SK-N-SH (cell line): ENCODE measurements at regions of chr2 and their contacts with region 1.

Region 1: DNA sequence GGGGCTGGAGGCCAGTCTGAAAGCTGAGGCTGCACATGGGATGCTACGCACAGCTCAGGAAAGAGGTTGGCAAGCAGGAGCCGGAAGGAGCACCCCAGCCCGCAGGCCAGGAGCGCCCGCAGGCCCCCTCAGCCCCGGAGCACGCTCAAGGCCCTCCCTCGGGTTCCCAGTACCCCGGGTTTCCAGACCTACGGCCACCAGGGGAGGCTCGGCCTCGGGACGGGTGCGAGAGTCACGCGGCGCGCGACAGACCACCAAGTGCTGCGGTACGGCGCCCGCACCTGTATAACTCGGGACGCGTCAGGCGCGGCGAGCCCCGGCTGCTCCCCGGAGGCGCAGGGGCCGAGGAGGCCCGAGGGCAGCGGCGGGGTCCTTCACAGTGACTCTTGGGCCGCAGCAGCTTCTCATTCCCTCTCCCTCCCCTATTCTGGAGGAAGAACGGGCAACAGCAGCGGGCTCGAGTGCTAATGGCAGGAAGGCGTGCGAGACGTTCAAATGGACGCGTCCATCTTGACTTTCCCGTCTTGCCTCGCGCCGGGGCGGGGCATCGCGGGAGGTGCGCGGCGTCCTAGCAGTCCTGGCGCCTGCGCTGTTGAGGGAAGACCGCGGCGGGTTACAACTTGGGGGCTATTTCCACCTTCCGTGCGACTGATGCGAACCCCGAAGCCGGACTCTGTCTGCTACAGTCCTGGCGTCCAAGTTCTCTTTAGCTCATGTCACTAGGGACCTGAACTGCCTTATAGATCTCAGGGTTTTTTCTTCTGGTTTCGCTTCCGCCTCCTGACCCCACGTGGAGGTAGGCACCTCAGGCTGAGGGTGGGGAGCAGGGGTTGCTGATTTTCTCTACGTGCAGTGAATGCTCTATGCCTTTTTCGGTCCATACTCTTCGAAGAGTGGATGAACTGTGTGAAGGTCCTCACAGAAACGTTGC is at the start of gene ANAPC1:
- DNase-seq: peak; percentile 90
- H3K4me3 ChIP-seq: peak within 1 kb of the TSS; percentile 84 to 98
- H3K27ac ChIP-seq: peak within 1 kb of the TSS; percentile 57 to 87
- H3K4me1 ChIP-seq: no peaks in the 10 kb centered on the region; a peak in 1 of 4 replicates
- H3K27me3 ChIP-seq: no peaks in the 10 kb centered on the region
- CTCF ChIP-seq: no peak
- EP300 ChIP-seq: no peak
- RAD21 ChIP-seq: no peak
- polyA plus RNA-seq, gene ANAPC1: 16.0 and 22.4 TPM in 2 replicates

Region 2: DNA sequence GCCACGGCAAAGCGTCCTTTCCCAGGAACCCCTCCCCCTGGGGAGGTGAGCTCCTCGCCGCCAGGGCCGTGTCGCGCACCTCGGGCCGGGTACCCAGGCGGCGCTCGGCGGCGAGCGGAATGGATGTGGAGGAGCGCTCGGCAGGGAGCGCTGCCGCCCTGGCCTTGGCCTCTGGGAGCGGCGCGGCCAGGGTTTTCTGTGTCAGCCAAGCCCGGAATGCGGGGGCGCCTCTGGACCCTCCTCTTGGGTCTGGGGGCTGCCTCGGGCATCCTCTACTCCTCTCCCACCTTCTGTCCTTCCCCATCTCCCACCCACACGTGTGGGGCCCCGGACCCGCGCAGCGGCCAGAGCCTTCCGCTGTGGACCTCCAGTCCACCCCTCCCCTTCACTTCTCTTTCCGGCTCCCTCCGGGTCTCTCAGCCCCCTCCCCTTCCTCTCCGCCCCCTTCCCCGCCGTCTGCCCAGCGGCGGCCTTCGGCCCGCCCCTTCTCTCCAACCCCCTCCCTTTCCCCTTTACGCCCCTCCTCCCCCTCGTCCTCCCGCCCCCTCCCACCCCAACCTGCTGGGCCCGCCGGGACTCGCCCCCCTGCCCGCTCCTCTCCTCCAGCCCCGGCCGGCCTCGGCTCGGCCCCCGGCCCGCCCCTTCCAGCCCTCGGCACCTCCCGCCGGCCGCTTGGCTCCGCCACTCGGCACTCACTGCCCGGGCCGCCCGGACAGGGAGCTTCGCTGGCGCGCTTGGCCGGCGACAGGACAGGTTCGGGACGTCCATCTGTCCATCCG is 14.2 kb after region 1 on chr2 and contains the start of gene MERTK:
- CTCF ChIA-PET with region 1: interaction called, 24 read pairs
- POLR2A ChIA-PET with region 1: interaction called, 6 read pairs
- DNase-seq: peak; percentile 99
- H3K4me3 ChIP-seq: peak within 1 kb of the TSS; percentile 68 to 90
- H3K27ac ChIP-seq: peak within 1 kb of the TSS; percentile 50 to 88
- H3K4me1 ChIP-seq: peaks cover 0 to 11% of the 10 kb centered on the region in 2 experiments; a peak in 1 of 4 replicates
- H3K27me3 ChIP-seq: no peaks in the 10 kb centered on the region; the same call in 1 of the 2 replicates
- CTCF ChIP-seq: peak; percentile 62
- EP300 ChIP-seq: 0 out of 4 replicates have a peak, but pooled peaks of 1 of the 2 experiments have one; percentile 2
- RAD21 ChIP-seq: peak; percentile 63
- polyA plus RNA-seq, gene MERTK: 9.6 and 12.4 TPM in 2 replicates

Region 3: GRCh38 chr2:112048887-112049286 is 165.0 kb after region 1 on chr2:
- CTCF ChIA-PET with region 1: interaction called, 215 read pairs
- POLR2A ChIA-PET with region 1: no interaction called
- DNase-seq: peak; percentile 42
- H3K4me3 ChIP-seq: peak overlapping the region in 1 of 2 experiments; percentile 29; a peak in 1 of 4 replicates
- H3K27ac ChIP-seq: no peak overlapping the region
- H3K4me1 ChIP-seq: peaks cover 5 to 8% of the 10 kb centered on the region in 2 experiments; a peak in 2 of 4 replicates
- H3K27me3 ChIP-seq: no peaks in the 10 kb centered on the region
- CTCF ChIP-seq: peak; percentile 82
- EP300 ChIP-seq: no peak
- RAD21 ChIP-seq: peak; percentile 89

Region 4: GRCh38 chr2:112674229-112674628 is 790.3 kb after region 1 on chr2:
- CTCF ChIA-PET with region 1: no interaction called
- POLR2A ChIA-PET with region 1: no interaction called
- DNase-seq: no peak
- H3K4me3 ChIP-seq: no peak overlapping the region
- H3K27ac ChIP-seq: no peak overlapping the region
- H3K4me1 ChIP-seq: no peaks in the 10 kb centered on the region
- H3K27me3 ChIP-seq: no peaks in the 10 kb centered on the region
- CTCF ChIP-seq: no peak
- EP300 ChIP-seq: no peak
- RAD21 ChIP-seq: no peak